ENCODE measurements at regions of chr14 and their contacts with region 1.

Region 1: GRCh38 chr14:39276005-39276404 is 42.3 kb downstream of the MIA2 start:
- DNase-seq: peak; percentile 8
- H3K27ac ChIP-seq: no peak overlapping the region
- CTCF ChIP-seq: no peak

Region 2: GRCh38 chr14:38941485-38941884 is 334.5 kb before region 1 on chr14:
- CTCF ChIA-PET with region 1: no interaction called
- POLR2A ChIA-PET with region 1: no interaction called
- DNase-seq: no peak
- H3K27ac ChIP-seq: no peak overlapping the region
- CTCF ChIP-seq: no peak

Region 3: DNA sequence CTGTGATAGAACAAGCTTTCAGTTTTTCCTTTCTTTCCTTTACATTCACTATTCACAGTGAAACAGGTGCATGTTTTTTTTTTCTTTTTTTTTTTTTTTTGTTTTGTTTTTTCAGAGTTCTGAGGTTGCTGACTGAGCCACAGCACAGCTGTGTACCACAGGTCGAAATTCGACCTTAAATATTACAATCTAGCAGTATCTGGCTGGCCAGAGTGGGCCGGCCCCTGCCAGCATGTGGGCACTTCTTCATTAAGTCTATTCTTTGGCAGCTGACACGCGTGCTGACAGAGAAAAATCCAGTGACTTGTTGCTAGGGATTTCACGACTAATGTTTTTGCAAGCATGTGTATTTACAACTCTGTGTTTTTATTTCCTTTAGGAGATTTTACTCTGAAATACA is 122.4 kb after region 1 on chr14:
- CTCF ChIA-PET with region 1: interaction called, 10 read pairs
- POLR2A ChIA-PET with region 1: no interaction called
- DNase-seq: no peak
- H3K27ac ChIP-seq: no peak overlapping the region
- CTCF ChIP-seq: no peak

Measured in RWPE1 (cell line).